ENCODE measurements at regions of chr5 and their contacts with region 1.

Region 1: DNA sequence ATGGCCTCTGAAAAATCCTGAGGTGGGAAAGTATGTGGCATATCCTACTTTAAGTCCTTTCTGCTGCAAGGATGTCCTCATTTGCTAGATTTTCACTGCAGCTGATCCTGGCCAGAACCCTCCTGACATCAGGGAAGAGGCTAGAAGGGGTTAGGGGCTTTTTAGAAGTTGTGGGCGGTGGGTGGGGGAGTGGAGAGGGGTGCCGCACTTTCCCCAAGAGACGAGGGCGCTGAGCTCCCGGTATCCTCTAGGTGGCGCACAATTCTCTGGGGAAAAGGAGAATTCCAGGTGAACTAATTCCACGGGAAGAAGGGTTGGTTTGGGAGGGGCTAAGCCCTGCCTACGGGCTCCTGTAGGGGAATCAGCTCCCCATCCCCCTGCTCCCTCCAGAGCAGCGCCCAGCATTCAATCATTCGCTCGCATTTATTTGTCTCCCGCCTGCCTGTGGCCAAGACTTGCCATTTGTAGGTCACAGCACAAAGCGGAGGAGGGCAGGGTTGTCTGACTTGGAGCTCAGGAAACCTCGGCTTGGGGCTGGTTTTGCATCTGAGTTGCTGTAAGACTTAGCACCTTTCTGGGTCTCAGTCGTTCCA is 42.9 kb upstream of the HAND1 start:
- DNase-seq: peak; percentile 76
- H3K4me3 Mint-ChIP-seq: no peak overlapping the region
- H3K27ac Mint-ChIP-seq: no peak overlapping the region
- H3K4me1 Mint-ChIP-seq: peaks cover 19% of the 10 kb centered on the region
- H3K27me3 Mint-ChIP-seq: peaks cover 27% of the 10 kb centered on the region
- CTCF ChIP-seq: peak; percentile 86

Region 2: DNA sequence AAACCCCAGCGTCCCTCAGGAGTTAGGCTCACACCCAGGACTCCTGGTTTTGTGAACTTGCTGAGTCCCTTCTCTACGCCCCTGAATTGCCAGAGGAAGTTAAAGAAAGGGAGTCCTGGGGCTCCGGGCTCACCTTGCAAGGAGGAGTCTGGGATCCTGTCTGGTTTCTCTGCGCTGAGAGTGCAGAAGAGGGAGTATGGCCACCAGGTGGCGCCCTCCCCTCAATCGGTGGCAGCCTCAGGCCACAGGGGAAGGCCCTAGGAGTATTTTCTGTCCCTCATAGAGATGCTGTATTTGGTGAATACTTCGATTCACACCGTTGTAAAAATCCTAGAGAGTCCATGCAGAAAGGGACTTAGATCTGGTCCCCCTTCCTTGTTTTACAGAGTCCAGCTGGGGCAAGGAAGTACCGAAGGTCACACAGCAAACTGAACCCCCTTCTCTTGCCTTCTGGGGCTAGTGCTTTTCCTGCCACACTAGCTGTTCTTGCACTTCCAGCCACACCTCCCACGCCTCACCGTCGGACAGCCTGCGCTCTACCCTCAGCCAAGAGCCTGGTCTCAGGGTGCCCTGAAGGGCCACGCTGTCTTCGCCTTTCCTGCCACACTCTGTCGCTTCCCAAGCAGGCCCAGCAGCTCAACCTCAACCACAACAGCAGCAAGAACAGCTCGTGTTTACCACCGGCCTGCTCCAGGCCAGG is 53.2 kb before region 1 on chr5:
- CTCF ChIA-PET with region 1: interaction called, 158 read pairs
- POLR2A ChIA-PET with region 1: no interaction called
- intact Hi-C with region 1: loop called (anchors 1 kb)
- DNase-seq: peak; percentile 83
- H3K4me3 Mint-ChIP-seq: no peak overlapping the region
- H3K27ac Mint-ChIP-seq: no peak overlapping the region
- H3K4me1 Mint-ChIP-seq: peaks cover 14% of the 10 kb centered on the region
- H3K27me3 Mint-ChIP-seq: peaks cover 24% of the 10 kb centered on the region
- CTCF ChIP-seq: peak; percentile 96

Region 3: GRCh38 chr5:154534457-154535050 is 13.6 kb after region 1 on chr5:
- CTCF ChIA-PET with region 1: interaction called, 77 read pairs
- POLR2A ChIA-PET with region 1: no interaction called
- intact Hi-C with region 1: no loop called
- DNase-seq: no peak
- H3K4me3 Mint-ChIP-seq: no peak overlapping the region
- H3K27ac Mint-ChIP-seq: no peak overlapping the region
- H3K4me1 Mint-ChIP-seq: no peaks in the 10 kb centered on the region
- H3K27me3 Mint-ChIP-seq: peaks cover 53% of the 10 kb centered on the region
- CTCF ChIP-seq: no peak

Region 4: GRCh38 chr5:154568589-154568988 is 47.6 kb after region 1 on chr5:
- CTCF ChIA-PET with region 1: interaction called, 34 read pairs
- POLR2A ChIA-PET with region 1: no interaction called
- intact Hi-C with region 1: no loop called
- DNase-seq: no peak
- H3K4me3 Mint-ChIP-seq: no peak overlapping the region
- H3K27ac Mint-ChIP-seq: no peak overlapping the region
- H3K4me1 Mint-ChIP-seq: no peaks in the 10 kb centered on the region
- H3K27me3 Mint-ChIP-seq: peaks cover 13% of the 10 kb centered on the region
- CTCF ChIP-seq: no peak

Region 5: DNA sequence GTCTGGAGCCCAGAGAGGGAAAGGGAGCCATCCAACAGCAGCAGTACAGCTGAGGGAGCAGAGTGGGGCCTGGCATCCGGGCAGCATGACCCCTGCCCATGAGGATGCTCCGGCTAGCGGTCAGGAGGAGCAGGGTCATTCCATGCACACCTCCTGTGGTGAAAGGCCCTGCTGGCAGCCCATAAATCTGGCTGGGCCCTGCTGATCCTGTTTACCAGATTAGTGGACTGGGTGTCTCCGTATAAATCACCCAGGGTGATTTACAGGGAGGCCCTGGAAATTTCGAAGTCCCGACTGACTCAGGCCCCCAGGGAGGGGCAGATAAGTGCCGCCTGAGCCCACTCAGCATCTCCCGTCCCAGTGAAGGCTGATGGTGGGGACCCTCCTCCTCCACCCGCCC is 74.7 kb after region 1 on chr5:
- CTCF ChIA-PET with region 1: interaction called, 44 read pairs
- POLR2A ChIA-PET with region 1: no interaction called
- intact Hi-C with region 1: no loop called
- DNase-seq: no peak
- H3K4me3 Mint-ChIP-seq: no peak overlapping the region
- H3K27ac Mint-ChIP-seq: no peak overlapping the region
- H3K4me1 Mint-ChIP-seq: peaks cover 19% of the 10 kb centered on the region
- H3K27me3 Mint-ChIP-seq: peaks cover 16% of the 10 kb centered on the region
- CTCF ChIP-seq: no peak

Region 6: GRCh38 chr5:154627698-154628678 is 107.0 kb after region 1 on chr5:
- CTCF ChIA-PET with region 1: interaction called, 22 read pairs
- POLR2A ChIA-PET with region 1: no interaction called
- intact Hi-C with region 1: no loop called
- DNase-seq: peak; percentile 62
- H3K4me3 Mint-ChIP-seq: no peak overlapping the region
- H3K27ac Mint-ChIP-seq: no peak overlapping the region
- H3K4me1 Mint-ChIP-seq: no peaks in the 10 kb centered on the region
- H3K27me3 Mint-ChIP-seq: no peaks in the 10 kb centered on the region
- CTCF ChIP-seq: no peak

Measured in MCF 10A (cell line).